Activated CD4-positive, alpha-beta T cell treated with anti-CD3 and anti-CD28 coated beads, Interleukin-2, amount 10 ng/mL, durations not matched to agents 24 days and 14 days (primary cell): ENCODE measurements at regions of chr5 and their contacts with region 1.

Region 1: GRCh38 chr5:132526290-132526973 is 16.9 kb downstream of the IL5 start:
- DNase-seq: peak; percentile 90
- H3K4me3 Mint-ChIP-seq: no peak overlapping the region
- H3K27ac Mint-ChIP-seq: peak overlapping the region; percentile 42
- H3K4me1 Mint-ChIP-seq: peaks cover 46% of the 10 kb centered on the region
- H3K27me3 Mint-ChIP-seq: peaks cover under 1% of the 10 kb centered on the region

Region 2: DNA sequence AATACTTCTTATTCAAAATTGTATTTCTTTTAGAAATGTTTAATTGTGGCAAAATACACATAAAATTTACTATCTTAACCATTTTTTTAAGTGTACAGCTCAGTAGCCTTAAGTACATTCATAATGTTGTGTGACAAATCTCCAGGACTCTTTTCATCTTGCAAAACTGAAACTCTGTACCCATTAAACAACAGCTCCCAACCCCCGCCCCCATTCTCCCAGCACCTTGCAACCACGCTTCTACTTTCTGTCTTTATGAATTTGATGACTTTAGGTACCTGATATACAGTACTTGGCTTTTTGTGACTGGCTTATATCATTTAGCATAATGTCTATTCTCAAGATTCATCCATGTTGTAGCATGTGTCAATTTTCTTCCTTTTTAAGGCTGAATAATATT is 19.7 kb after region 1 on chr5:
- intact Hi-C with region 1: loop called (anchors 2 kb)
- DNase-seq: peak; percentile 72
- H3K4me3 Mint-ChIP-seq: no peak overlapping the region
- H3K27ac Mint-ChIP-seq: peak overlapping the region; percentile 42
- H3K4me1 Mint-ChIP-seq: peaks cover 25% of the 10 kb centered on the region
- H3K27me3 Mint-ChIP-seq: peaks cover 4% of the 10 kb centered on the region

Region 3: GRCh38 chr5:132576123-132576522 is 49.7 kb after region 1 on chr5:
- intact Hi-C with region 1: loop called (anchors 1 kb)
- DNase-seq: no peak
- H3K4me3 Mint-ChIP-seq: no peak overlapping the region
- H3K27ac Mint-ChIP-seq: peak overlapping the region; percentile 52
- H3K4me1 Mint-ChIP-seq: peaks cover 16% of the 10 kb centered on the region
- H3K27me3 Mint-ChIP-seq: no peaks in the 10 kb centered on the region

Region 4: GRCh38 chr5:132753135-132753987 is 226.9 kb after region 1 on chr5:
- intact Hi-C with region 1: loop called (anchors 1 kb)
- DNase-seq: peak; percentile 74
- H3K4me3 Mint-ChIP-seq: no peak overlapping the region
- H3K27ac Mint-ChIP-seq: peak overlapping the region; percentile 82
- H3K4me1 Mint-ChIP-seq: peaks cover 57% of the 10 kb centered on the region
- H3K27me3 Mint-ChIP-seq: no peaks in the 10 kb centered on the region

Region 5: GRCh38 chr5:132820162-132820754 is 293.8 kb after region 1 on chr5:
- intact Hi-C with region 1: loop called (anchors 1 kb)
- DNase-seq: peak; percentile 97
- H3K4me3 Mint-ChIP-seq: peak overlapping the region; percentile 37
- H3K27ac Mint-ChIP-seq: no peak overlapping the region
- H3K4me1 Mint-ChIP-seq: peaks cover 15% of the 10 kb centered on the region
- H3K27me3 Mint-ChIP-seq: peaks cover 39% of the 10 kb centered on the region